SK-N-SH (cell line): ENCODE measurements at regions of chr14 and their contacts with region 1.

Region 1: DNA sequence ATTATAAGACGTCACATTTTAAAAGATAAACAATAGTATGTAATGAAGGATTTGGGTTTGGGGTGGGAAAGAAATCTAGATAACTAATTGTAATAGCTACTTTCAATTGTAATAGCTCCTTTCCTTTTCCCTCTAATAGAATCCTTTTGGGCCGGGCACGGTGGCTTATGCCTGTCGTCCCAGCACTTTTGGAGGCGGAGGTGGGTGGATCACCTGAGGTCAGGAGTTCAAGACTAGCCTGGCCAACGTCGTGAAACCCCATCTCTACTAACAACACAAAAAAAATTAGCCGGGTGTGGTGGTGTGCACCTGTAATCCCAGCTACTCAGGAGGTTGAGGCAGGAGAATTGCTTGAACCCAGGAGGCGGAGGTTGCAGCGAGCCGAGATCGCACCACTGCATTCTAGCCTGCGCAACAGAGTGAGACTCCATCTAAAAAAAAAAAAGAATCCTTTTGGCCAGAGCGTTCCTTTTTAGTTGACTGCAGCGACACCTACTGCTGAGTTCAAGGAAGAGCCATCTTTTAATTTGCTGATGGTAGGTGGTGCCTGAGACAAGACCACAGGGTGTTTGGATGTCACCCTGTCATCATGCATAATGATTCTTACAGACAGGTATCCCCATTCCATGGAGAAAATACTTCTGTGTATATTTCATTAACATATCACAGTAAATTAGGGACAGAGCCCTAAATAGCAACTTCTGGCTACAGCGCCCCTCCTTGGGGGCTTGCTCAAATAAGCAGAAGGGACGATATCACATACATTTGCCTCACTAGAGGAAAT is 79.5 kb downstream of the ARMH4 start:
- DNase-seq: peak; percentile 46
- H3K4me3 ChIP-seq: peak overlapping the region; percentile 14 to 31; a peak in 2 of 4 replicates
- H3K27ac ChIP-seq: no peak overlapping the region
- H3K4me1 ChIP-seq: peaks cover 0 to 8% of the 10 kb centered on the region in 2 experiments; a peak in 1 of 4 replicates
- H3K27me3 ChIP-seq: peaks cover 2% of the 10 kb centered on the region; the same call in 1 of the 2 replicates
- CTCF ChIP-seq: peak; percentile 86
- EP300 ChIP-seq: no peak
- RAD21 ChIP-seq: peak; percentile 79

Region 2: GRCh38 chr14:57692671-57693070 is 379.8 kb before region 1 on chr14:
- CTCF ChIA-PET with region 1: interaction called, 25 read pairs
- POLR2A ChIA-PET with region 1: no interaction called
- DNase-seq: peak; percentile 10
- H3K4me3 ChIP-seq: no peak overlapping the region; a peak in 1 of 4 replicates
- H3K27ac ChIP-seq: no peak overlapping the region
- H3K4me1 ChIP-seq: no peaks in the 10 kb centered on the region
- H3K27me3 ChIP-seq: no peaks in the 10 kb centered on the region
- CTCF ChIP-seq: peak; percentile 76
- EP300 ChIP-seq: no peak
- RAD21 ChIP-seq: peak; percentile 67

Region 3: DNA sequence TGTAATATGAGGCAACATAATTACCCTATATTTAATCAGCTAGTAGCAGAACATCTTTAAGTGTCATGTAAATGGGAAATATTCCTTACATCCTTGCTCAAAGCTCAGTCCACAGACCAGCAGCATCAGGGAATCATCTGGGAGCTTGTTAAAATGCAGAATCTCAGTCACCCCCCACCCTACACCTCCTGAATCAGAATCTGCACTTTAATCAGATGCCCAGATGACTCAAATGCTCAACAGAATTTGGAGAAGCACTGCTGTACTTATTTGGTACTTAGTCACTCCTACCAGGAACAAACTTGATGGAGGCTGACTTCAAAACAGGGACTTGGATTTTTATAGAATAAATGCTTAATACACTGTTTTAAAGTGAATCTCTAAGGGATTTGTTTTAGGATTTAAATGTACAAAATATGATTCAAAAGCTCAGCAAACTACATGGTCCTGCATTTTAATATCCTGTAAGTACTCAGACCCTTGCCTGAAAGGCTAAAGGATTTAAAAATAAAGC is 16.9 kb before region 1 on chr14:
- CTCF ChIA-PET with region 1: interaction called, 10 read pairs
- POLR2A ChIA-PET with region 1: no interaction called
- DNase-seq: no peak
- H3K4me3 ChIP-seq: no peak overlapping the region
- H3K27ac ChIP-seq: no peak overlapping the region
- H3K4me1 ChIP-seq: peaks cover 0 to 4% of the 10 kb centered on the region in 2 experiments; a peak in 1 of 4 replicates
- H3K27me3 ChIP-seq: peaks cover 18% of the 10 kb centered on the region; the same call in 1 of the 2 replicates
- CTCF ChIP-seq: no peak
- EP300 ChIP-seq: no peak
- RAD21 ChIP-seq: no peak

Region 4: GRCh38 chr14:58118097-58118815 is 45.8 kb after region 1 on chr14:
- CTCF ChIA-PET with region 1: no interaction called
- POLR2A ChIA-PET with region 1: no interaction called
- DNase-seq: no peak
- H3K4me3 ChIP-seq: no peak overlapping the region
- H3K27ac ChIP-seq: no peak overlapping the region
- H3K4me1 ChIP-seq: no peaks in the 10 kb centered on the region
- H3K27me3 ChIP-seq: no peaks in the 10 kb centered on the region; the same call in 1 of the 2 replicates
- CTCF ChIP-seq: no peak
- EP300 ChIP-seq: no peak
- RAD21 ChIP-seq: no peak

Region 5: GRCh38 chr14:58479975-58480374 is 407.5 kb after region 1 on chr14:
- CTCF ChIA-PET with region 1: no interaction called
- POLR2A ChIA-PET with region 1: no interaction called
- DNase-seq: no peak
- H3K4me3 ChIP-seq: no peak overlapping the region
- H3K27ac ChIP-seq: no peak overlapping the region
- H3K4me1 ChIP-seq: no peaks in the 10 kb centered on the region
- H3K27me3 ChIP-seq: no peaks in the 10 kb centered on the region
- CTCF ChIP-seq: no peak
- EP300 ChIP-seq: no peak
- RAD21 ChIP-seq: no peak